Left ventricle myocardium inferior (tissue), 1 donor: ENCODE measurements at regions of chr13 and their contacts with region 1.

Region 1: DNA sequence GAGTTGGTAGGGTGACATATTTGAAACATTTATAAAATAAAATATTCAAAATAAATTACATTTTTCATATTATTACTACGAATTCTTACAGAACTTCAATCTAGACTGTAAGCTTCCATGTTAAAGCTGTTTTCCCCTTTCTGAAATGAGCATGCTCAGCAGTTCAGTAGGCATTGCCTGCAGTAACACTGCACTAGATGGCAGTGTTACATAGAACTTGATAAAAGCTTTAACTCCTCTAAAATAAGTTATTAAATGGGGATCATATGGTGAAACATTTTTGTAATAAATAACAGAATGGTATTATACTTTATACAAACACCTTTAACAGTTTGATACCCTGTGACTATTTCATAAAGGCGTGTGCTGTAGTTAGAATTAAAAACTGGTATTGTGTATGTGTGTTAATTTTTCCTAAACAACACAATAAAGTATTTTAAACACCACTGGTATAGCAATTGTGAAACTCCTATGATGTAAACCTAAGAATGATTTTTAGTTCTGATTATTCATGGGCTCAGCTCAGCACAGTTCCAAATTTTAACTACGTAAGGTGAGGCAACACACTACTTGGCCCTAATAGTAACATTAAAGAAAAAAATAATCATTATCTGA is 11.6 kb upstream of the GPR18 start:
- DNase-seq: no peak
- H3K4me3 ChIP-seq: no peak overlapping the region
- H3K27ac ChIP-seq: no peak overlapping the region
- H3K4me1 ChIP-seq: peaks cover 14% of the 10 kb centered on the region
- H3K27me3 ChIP-seq: no peaks in the 10 kb centered on the region
- CTCF ChIP-seq: peak; percentile 75

Region 2: DNA sequence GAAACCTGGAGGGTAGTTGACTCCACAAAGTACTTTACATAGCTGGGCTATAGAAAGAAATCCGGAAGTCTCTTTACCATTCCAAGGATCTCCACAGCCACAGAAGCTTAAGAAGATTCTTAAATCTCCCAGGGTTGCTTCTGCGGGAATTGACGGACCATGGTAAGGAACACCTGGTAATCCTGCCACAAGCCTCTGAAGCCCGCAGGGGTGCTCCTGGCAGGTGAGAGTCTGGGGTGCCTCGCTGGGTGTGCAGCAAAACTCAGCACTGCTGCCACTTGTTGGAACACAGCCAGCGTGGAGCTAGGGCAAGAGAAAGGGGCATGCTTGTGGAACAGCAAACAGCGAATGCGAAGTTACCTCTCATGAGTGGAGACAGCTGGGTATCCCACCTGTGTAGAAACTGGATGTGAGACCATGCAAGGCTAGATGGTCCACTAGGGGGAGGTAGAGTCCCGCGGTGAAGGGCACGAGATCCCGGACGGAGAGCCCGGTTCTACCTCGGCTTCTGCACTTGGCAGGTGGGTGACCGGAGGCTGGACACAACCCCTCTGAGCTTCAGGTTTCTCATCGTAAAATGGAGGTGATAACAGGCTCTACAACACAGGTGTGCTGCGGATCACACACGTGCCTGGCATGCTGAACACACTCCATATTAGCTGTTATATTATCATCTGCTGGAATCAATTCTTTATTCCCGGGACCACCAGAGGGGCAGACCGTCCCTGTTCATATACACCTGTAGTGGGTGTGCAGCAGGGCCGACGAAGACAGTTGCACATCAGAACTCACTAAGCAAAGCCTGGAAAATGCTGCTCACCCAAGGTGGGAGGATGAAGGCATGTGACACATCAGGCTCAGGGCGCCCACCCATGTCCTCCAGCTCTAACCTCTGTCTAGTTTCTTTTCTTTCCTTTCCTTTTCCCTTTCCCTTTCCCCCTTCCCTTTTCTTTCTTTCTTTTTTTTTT is 93.1 kb before region 1 on chr13:
- intact Hi-C with region 1: loop called (anchors 5 kb)
- DNase-seq: peak; percentile 65
- H3K4me3 ChIP-seq: no peak overlapping the region
- H3K27ac ChIP-seq: no peak overlapping the region
- H3K4me1 ChIP-seq: no peaks in the 10 kb centered on the region
- H3K27me3 ChIP-seq: peaks cover 52% of the 10 kb centered on the region
- CTCF ChIP-seq: peak; percentile 97

Region 3: DNA sequence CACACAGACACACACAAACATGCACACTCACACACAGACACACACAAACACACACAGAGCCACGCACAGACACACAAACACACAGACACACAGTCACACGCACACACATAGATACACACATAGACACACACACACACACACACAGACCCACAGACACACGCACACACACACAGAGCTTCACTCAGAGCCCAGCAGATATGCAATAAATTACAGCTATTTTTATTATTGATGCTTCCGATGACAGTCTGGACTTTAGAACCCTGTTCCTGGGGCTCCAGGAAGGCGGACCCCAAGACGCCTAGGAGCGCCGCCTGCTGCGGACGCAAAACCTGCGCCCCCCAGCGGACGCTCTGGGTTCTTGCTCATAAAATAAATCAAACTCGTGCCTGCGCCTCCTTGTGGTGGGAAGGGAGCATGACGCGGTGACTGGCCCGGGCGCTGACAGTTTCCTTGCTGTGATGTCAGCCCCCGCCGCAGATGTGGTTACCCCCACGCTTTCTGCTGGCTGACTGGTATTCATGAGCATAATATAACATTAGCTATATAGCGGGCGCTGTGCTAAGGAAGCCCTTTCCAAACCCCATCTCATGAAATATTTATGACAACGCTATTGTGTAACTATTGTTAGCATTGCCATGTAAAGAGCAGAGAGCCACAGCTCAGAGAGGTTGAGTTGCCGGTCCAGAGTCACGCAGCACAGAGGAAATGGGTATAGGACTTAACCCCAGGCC is 167.1 kb after region 1 on chr13:
- intact Hi-C with region 1: loop called (anchors 5 kb)
- DNase-seq: peak; percentile 85
- H3K4me3 ChIP-seq: no peak overlapping the region
- H3K27ac ChIP-seq: no peak overlapping the region
- H3K4me1 ChIP-seq: peaks cover 17% of the 10 kb centered on the region
- H3K27me3 ChIP-seq: peaks cover 27% of the 10 kb centered on the region
- CTCF ChIP-seq: peak; percentile 100

Region 4: GRCh38 chr13:99522298-99522697 is 252.6 kb after region 1 on chr13:
- intact Hi-C with region 1: no loop called
- DNase-seq: no peak
- H3K4me3 ChIP-seq: no peak overlapping the region
- H3K27ac ChIP-seq: no peak overlapping the region
- H3K4me1 ChIP-seq: peaks cover 10% of the 10 kb centered on the region
- H3K27me3 ChIP-seq: no peaks in the 10 kb centered on the region
- CTCF ChIP-seq: no peak